Activated CD4-positive, alpha-beta T cell treated with anti-CD3 and anti-CD28 coated beads for 36 hours (primary cell): ENCODE measurements at regions of chr1 and their contacts with region 1.

Region 1: GRCh38 chr1:61851849-61852669 is 109.8 kb downstream of the PATJ start:
- DNase-seq: no peak
- ATAC-seq: peak; percentile 68
- H3K4me3 Mint-ChIP-seq: no peak overlapping the region
- H3K27ac Mint-ChIP-seq: no peak overlapping the region
- H3K4me1 Mint-ChIP-seq: no peaks in the 10 kb centered on the region
- H3K27me3 Mint-ChIP-seq: no peaks in the 10 kb centered on the region

Region 2: GRCh38 chr1:60848583-60849188 is 1003.4 kb before region 1 on chr1:
- CTCF ChIA-PET with region 1: no interaction called
- POLR2A ChIA-PET with region 1: no interaction called
- intact Hi-C with region 1: loop called in 1 of 2 experiments (anchors 5 kb)
- DNase-seq: no peak
- ATAC-seq: no peak
- H3K4me3 Mint-ChIP-seq: no peak overlapping the region
- H3K27ac Mint-ChIP-seq: no peak overlapping the region
- H3K4me1 Mint-ChIP-seq: no peaks in the 10 kb centered on the region
- H3K27me3 Mint-ChIP-seq: peaks cover 10% of the 10 kb centered on the region

Region 3: GRCh38 chr1:61453111-61453961 is 398.7 kb before region 1 on chr1:
- CTCF ChIA-PET with region 1: no interaction called
- POLR2A ChIA-PET with region 1: no interaction called
- intact Hi-C with region 1: loop called in 1 of 2 experiments (anchors 10 kb)
- DNase-seq: peak; percentile 84
- ATAC-seq: peak; percentile 94
- H3K4me3 Mint-ChIP-seq: no peak overlapping the region
- H3K27ac Mint-ChIP-seq: peak overlapping the region; percentile 14
- H3K4me1 Mint-ChIP-seq: peaks cover 12% of the 10 kb centered on the region
- H3K27me3 Mint-ChIP-seq: no peaks in the 10 kb centered on the region

Region 4: GRCh38 chr1:61588736-61589672 is 263.1 kb before region 1 on chr1:
- CTCF ChIA-PET with region 1: interaction called, 5 read pairs
- POLR2A ChIA-PET with region 1: no interaction called
- intact Hi-C with region 1: loop called (anchors 2 kb)
- DNase-seq: peak; percentile 81
- ATAC-seq: peak; percentile 97
- H3K4me3 Mint-ChIP-seq: no peak overlapping the region
- H3K27ac Mint-ChIP-seq: no peak overlapping the region
- H3K4me1 Mint-ChIP-seq: no peaks in the 10 kb centered on the region
- H3K27me3 Mint-ChIP-seq: peaks cover 5% of the 10 kb centered on the region

Region 5: GRCh38 chr1:61699911-61700851 is 151.9 kb before region 1 on chr1:
- CTCF ChIA-PET with region 1: interaction called, 3 read pairs
- POLR2A ChIA-PET with region 1: no interaction called
- intact Hi-C with region 1: loop called in 1 of 2 experiments (anchors 5 kb)
- DNase-seq: no peak
- ATAC-seq: no peak
- H3K4me3 Mint-ChIP-seq: no peak overlapping the region
- H3K27ac Mint-ChIP-seq: no peak overlapping the region
- H3K4me1 Mint-ChIP-seq: no peaks in the 10 kb centered on the region
- H3K27me3 Mint-ChIP-seq: no peaks in the 10 kb centered on the region